T-cell (primary cell): ENCODE measurements at regions of chr5 and their contacts with region 1.

Region 1: DNA sequence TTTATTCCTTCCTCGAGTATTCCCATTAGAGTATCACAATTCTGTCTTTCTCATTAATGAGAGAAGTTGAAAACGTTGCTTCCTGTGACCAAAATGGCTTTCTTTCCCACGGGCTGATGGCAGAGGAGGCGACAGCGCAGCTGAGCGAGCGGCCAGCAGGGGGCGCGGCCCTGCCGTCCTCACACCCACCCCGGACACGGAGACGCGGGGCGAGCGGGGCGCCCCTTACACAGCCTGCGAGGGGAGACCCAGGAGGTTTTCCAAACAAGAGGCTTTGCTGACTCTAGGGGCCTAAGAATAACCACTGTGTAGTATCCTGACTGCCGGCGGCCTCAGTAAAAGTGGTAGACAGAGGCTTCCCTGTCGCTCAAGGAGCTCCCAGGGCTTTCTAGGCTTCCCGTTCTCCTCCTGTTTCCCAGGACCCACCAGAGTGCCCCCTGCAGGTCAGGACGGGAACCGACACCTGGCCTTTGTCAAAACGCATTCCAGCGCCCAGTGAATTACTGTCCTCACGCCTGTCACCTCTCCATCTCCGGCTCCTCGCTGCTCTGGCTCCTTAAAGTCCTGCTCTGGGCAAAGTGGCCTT is 27.3 kb upstream of the FGF1 start:
- DNase-seq: peak; percentile 55 to 94 (median 79)
- ATAC-seq: peak; percentile 98 to 99 (median 98)
- H3K4me3 ChIP-seq: peak overlapping the region; percentile 61 to 90
- H3K4me3 Mint-ChIP-seq: peak overlapping the region; percentile 63 to 73 (median 71)
- H3K27ac ChIP-seq: no peak overlapping the region
- H3K27ac Mint-ChIP-seq: no peak overlapping the region
- H3K4me1 ChIP-seq: peaks cover 0 to 13% of the 10 kb centered on the region in 2 experiments
- H3K4me1 Mint-ChIP-seq: peaks cover 10 to 15% (median 10%) of the 10 kb centered on the region in 3 donors
- H3K27me3 ChIP-seq: peaks cover 0 to 4% of the 10 kb centered on the region in 2 experiments
- H3K27me3 Mint-ChIP-seq: peaks cover 4 to 7% of the 10 kb centered on the region in 2 donors

Region 2: GRCh38 chr5:142012792-142013388 is 700.3 kb before region 1 on chr5 and contains the start of gene GNPDA1:
- CTCF ChIA-PET with region 1: interaction called in 1 of 2 experiments, 10 read pairs
- POLR2A ChIA-PET with region 1: no interaction called
- DNase-seq: peak in 34 of 35 experiments; percentile 20 to 82 (median 47)
- ATAC-seq: peak; percentile 71 to 79 (median 76)
- H3K4me3 ChIP-seq: peak within 1 kb of the TSS; percentile 69 to 78
- H3K4me3 Mint-ChIP-seq: peak within 1 kb of the TSS; percentile 78 to 87 (median 85)
- H3K27ac ChIP-seq: peak within 1 kb of the TSS; percentile 81
- H3K27ac Mint-ChIP-seq: peak within 1 kb of the TSS; percentile 93 to 95
- H3K4me1 ChIP-seq: peaks cover 23 to 63% of the 10 kb centered on the region in 2 experiments
- H3K4me1 Mint-ChIP-seq: peaks cover 53 to 78% (median 63%) of the 10 kb centered on the region in 3 donors
- H3K27me3 ChIP-seq: no peaks in the 10 kb centered on the region
- H3K27me3 Mint-ChIP-seq: no peaks in the 10 kb centered on the region
- total RNA-seq, gene GNPDA1: 12.6 to 30.3 (median 29.3) TPM

Region 3: GRCh38 chr5:142520886-142521285 is 192.3 kb before region 1 on chr5:
- CTCF ChIA-PET with region 1: no interaction called
- POLR2A ChIA-PET with region 1: no interaction called
- DNase-seq: no peak
- ATAC-seq: no peak
- H3K4me3 ChIP-seq: no peak overlapping the region
- H3K4me3 Mint-ChIP-seq: no peak overlapping the region
- H3K27ac ChIP-seq: no peak overlapping the region
- H3K27ac Mint-ChIP-seq: no peak overlapping the region
- H3K4me1 ChIP-seq: no peaks in the 10 kb centered on the region
- H3K4me1 Mint-ChIP-seq: no peaks in the 10 kb centered on the region
- H3K27me3 ChIP-seq: no peaks in the 10 kb centered on the region
- H3K27me3 Mint-ChIP-seq: peaks cover 3% of the 10 kb centered on the region in 2 donors

Region 4: GRCh38 chr5:142737179-142737578 is 24.0 kb after region 1 on chr5:
- CTCF ChIA-PET with region 1: interaction called, 4 to 13 read pairs
- POLR2A ChIA-PET with region 1: no interaction called
- DNase-seq: no peak
- ATAC-seq: no peak
- H3K4me3 ChIP-seq: no peak overlapping the region
- H3K4me3 Mint-ChIP-seq: no peak overlapping the region
- H3K27ac ChIP-seq: no peak overlapping the region
- H3K27ac Mint-ChIP-seq: no peak overlapping the region
- H3K4me1 ChIP-seq: peaks cover 0 to 29% of the 10 kb centered on the region in 2 experiments
- H3K4me1 Mint-ChIP-seq: peaks cover 14 to 29% (median 25%) of the 10 kb centered on the region in 3 donors
- H3K27me3 ChIP-seq: no peaks in the 10 kb centered on the region
- H3K27me3 Mint-ChIP-seq: peaks cover 0 to 5% of the 10 kb centered on the region in 2 donors

Region 5: GRCh38 chr5:142748568-142749249 is 35.5 kb after region 1 on chr5:
- CTCF ChIA-PET with region 1: interaction called, 3 to 26 read pairs
- POLR2A ChIA-PET with region 1: no interaction called
- DNase-seq: peak; percentile 6 to 75 (median 44)
- ATAC-seq: peak; percentile 45 to 67 (median 54)
- H3K4me3 ChIP-seq: no peak overlapping the region
- H3K4me3 Mint-ChIP-seq: no peak overlapping the region
- H3K27ac ChIP-seq: no peak overlapping the region
- H3K27ac Mint-ChIP-seq: no peak overlapping the region
- H3K4me1 ChIP-seq: no peaks in the 10 kb centered on the region
- H3K4me1 Mint-ChIP-seq: peaks cover 0 to 7% (median 4%) of the 10 kb centered on the region in 3 donors
- H3K27me3 ChIP-seq: no peaks in the 10 kb centered on the region
- H3K27me3 Mint-ChIP-seq: peaks cover 6 to 9% of the 10 kb centered on the region in 2 donors

Region 6: GRCh38 chr5:142769741-142770631 is 56.8 kb after region 1 on chr5 and contains the start of gene ARHGAP26:
- CTCF ChIA-PET with region 1: interaction called in 1 of 2 experiments, 16 read pairs
- POLR2A ChIA-PET with region 1: no interaction called
- DNase-seq: peak; percentile 81 to 95 (median 87)
- ATAC-seq: peak; percentile 89 to 93 (median 92)
- H3K4me3 ChIP-seq: peak within 1 kb of the TSS; percentile 69 to 89
- H3K4me3 Mint-ChIP-seq: peak within 1 kb of the TSS; percentile 83 to 95 (median 91)
- H3K27ac ChIP-seq: peak within 1 kb of the TSS; percentile 67
- H3K27ac Mint-ChIP-seq: peak within 1 kb of the TSS; percentile 81 to 92
- H3K4me1 ChIP-seq: peaks cover 14 to 26% of the 10 kb centered on the region in 2 experiments
- H3K4me1 Mint-ChIP-seq: peaks cover 37 to 43% (median 40%) of the 10 kb centered on the region in 3 donors
- H3K27me3 ChIP-seq: no peaks in the 10 kb centered on the region
- H3K27me3 Mint-ChIP-seq: no peaks in the 10 kb centered on the region
- total RNA-seq, gene ARHGAP26: 22.8 to 49.3 (median 28.3) TPM

Region 7: DNA sequence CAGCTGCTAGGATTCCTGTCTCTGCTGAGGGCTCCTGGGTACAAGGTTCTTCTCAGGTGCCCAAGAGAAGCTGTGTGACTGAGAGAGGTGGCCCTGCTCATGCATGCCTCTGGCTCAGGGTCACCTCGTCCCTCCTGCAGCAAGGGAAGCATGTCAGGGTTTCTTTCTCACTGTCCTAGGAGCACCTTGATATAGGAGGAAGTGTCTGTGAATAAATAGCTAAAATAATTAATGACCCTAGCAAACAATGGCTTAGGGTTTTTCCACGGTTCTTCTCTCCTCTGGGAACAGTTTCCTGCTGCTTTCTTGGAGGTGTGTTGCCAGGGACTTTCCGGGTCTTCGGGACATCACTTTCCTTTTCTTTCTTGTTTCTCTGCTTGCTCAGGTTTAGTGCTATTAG is 144.2 kb after region 1 on chr5:
- CTCF ChIA-PET with region 1: no interaction called
- POLR2A ChIA-PET with region 1: no interaction called
- DNase-seq: no peak
- ATAC-seq: no peak
- H3K4me3 ChIP-seq: no peak overlapping the region
- H3K4me3 Mint-ChIP-seq: no peak overlapping the region
- H3K27ac ChIP-seq: no peak overlapping the region
- H3K27ac Mint-ChIP-seq: no peak overlapping the region
- H3K4me1 ChIP-seq: peaks cover 0 to 18% of the 10 kb centered on the region in 2 experiments
- H3K4me1 Mint-ChIP-seq: peaks cover 42 to 73% (median 46%) of the 10 kb centered on the region in 3 donors
- H3K27me3 ChIP-seq: no peaks in the 10 kb centered on the region
- H3K27me3 Mint-ChIP-seq: no peaks in the 10 kb centered on the region

Region 8: DNA sequence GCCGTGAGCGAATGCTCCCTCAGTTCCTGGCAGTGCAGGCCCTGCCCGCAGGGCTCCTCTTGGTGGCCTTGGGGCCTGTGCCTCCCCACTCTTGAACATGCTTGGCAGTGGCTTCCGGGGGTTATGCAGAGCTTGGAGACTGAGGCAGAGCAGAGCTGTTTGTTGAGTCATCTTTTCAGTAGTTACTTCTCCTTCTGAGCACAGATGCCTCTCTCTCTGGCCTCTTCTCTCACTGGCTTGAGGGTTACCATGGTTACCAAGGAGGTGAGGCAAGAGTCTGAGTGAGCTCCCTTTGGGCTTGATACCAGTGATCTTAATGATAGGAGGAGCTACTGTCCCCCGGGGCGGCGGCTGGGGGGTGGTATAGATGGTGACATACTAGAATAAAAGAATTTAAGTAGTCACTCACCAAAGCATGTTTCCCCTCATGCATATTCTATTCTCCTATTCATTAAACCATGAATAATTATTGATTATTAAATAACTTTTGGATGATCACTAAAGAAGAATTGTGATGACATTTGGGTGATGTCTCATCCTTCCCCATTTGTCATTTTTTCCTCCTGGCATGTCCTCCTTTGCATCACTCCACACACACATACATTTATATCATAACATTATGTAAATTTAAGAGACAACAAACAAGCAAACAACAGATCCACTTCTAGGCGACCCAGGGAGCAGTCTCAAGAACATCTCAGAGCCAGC is 168.0 kb after region 1 on chr5:
- CTCF ChIA-PET with region 1: interaction called, 9 to 20 read pairs
- POLR2A ChIA-PET with region 1: no interaction called
- DNase-seq: peak in 2 of 35 experiments; percentile 7 to 29
- ATAC-seq: no peak
- H3K4me3 ChIP-seq: no peak overlapping the region
- H3K4me3 Mint-ChIP-seq: no peak overlapping the region
- H3K27ac ChIP-seq: no peak overlapping the region
- H3K27ac Mint-ChIP-seq: no peak overlapping the region
- H3K4me1 ChIP-seq: no peaks in the 10 kb centered on the region
- H3K4me1 Mint-ChIP-seq: peaks cover 6 to 14% (median 7%) of the 10 kb centered on the region in 3 donors
- H3K27me3 ChIP-seq: no peaks in the 10 kb centered on the region
- H3K27me3 Mint-ChIP-seq: no peaks in the 10 kb centered on the region

Region 9: GRCh38 chr5:142888469-142889085 is 175.4 kb after region 1 on chr5:
- CTCF ChIA-PET with region 1: interaction called, 7 to 20 read pairs
- POLR2A ChIA-PET with region 1: no interaction called
- DNase-seq: peak in 3 of 35 experiments; percentile 8 to 54 (median 13)
- ATAC-seq: peak in 2 of 4 experiments; percentile 32 to 40
- H3K4me3 ChIP-seq: no peak overlapping the region
- H3K4me3 Mint-ChIP-seq: no peak overlapping the region
- H3K27ac ChIP-seq: no peak overlapping the region
- H3K27ac Mint-ChIP-seq: no peak overlapping the region
- H3K4me1 ChIP-seq: no peaks in the 10 kb centered on the region
- H3K4me1 Mint-ChIP-seq: peaks cover 15 to 19% (median 18%) of the 10 kb centered on the region in 3 donors
- H3K27me3 ChIP-seq: no peaks in the 10 kb centered on the region
- H3K27me3 Mint-ChIP-seq: no peaks in the 10 kb centered on the region

Region 10: GRCh38 chr5:142974409-142974808 is 261.2 kb after region 1 on chr5:
- CTCF ChIA-PET with region 1: no interaction called
- POLR2A ChIA-PET with region 1: no interaction called
- DNase-seq: no peak
- ATAC-seq: no peak
- H3K4me3 ChIP-seq: no peak overlapping the region
- H3K4me3 Mint-ChIP-seq: no peak overlapping the region
- H3K27ac ChIP-seq: peak overlapping the region; percentile 42
- H3K27ac Mint-ChIP-seq: peak overlapping the region in 1 of 2 donors; percentile 57
- H3K4me1 ChIP-seq: peaks cover 3 to 48% of the 10 kb centered on the region in 2 experiments
- H3K4me1 Mint-ChIP-seq: peaks cover 32 to 83% (median 69%) of the 10 kb centered on the region in 3 donors
- H3K27me3 ChIP-seq: no peaks in the 10 kb centered on the region
- H3K27me3 Mint-ChIP-seq: no peaks in the 10 kb centered on the region